ENCODE measurements at regions of chr3 and their contacts with region 1.

Region 1: DNA sequence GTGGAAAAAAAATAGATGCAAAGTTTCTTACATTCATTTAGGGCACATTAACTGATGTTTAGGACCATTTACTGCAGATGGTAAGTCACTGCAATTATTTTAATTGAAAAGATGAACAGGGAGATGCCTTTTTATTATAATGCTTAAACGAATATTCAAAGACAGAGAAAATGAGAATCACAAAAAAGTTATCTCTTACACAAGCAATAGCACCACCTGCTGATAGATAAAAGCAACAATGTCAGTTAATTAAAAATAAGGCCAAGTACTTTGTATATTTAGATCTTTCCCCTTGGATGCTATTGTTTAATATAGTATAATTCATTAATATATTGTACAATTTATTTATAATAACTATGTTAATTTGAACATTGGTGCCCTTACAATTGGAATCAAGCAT is 55.9 kb downstream of the IFT80 start:
- DNase-seq: no peak
- ATAC-seq: no peak
- H3K4me3 ChIP-seq: no peak overlapping the region
- H3K27ac ChIP-seq: no peak overlapping the region
- H3K4me1 ChIP-seq: no peaks in the 10 kb centered on the region
- H3K27me3 ChIP-seq: no peaks in the 10 kb centered on the region
- CTCF ChIP-seq: peak; percentile 34 to 63 (median 45); a peak in 3 of 6 replicates
- POLR2A ChIP-seq: no peak
- RAD21 ChIP-seq: peak; percentile 67

Region 2: DNA sequence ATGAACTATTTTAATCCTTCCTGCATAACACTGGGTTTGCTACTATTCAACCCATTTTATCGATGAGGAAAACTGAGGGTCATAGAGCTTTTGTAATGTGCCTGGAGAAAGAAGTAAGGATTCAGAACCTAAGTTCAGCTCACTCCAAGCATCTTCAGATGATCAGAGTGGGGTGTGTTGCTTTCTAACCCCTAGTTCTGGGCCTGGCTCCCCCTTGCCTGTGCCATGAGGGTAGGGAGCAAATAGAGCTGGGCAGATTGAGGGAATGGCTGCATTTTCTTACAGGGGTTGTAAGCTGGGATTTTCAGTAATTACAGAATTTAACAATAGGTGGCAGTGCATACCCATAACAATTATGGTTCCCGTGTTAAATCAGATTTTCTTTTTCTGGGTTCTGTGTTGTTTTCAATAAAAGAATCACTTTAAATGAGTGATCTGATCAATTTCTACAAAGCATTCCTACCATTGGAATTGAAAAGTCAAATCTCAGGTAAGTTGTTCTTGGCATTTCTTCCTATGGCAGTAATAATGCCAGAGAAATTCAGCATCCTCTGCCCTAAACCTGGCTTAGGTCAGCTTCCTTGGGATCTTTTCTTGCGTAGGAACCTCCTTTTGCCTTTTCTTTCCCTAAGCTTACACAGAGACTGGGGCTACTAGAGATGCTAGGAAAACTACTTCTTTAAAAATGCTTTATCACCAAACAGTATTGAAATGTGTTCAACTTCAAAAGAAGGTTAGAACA is 458.3 kb before region 1 on chr3:
- CTCF ChIA-PET with region 1: no interaction called
- POLR2A ChIA-PET with region 1: no interaction called
- RAD21 ChIA-PET with region 1: no interaction called
- intact Hi-C with region 1: loop called (anchors 5 kb)
- DNase-seq: no peak
- ATAC-seq: peak; percentile 86
- H3K4me3 ChIP-seq: no peak overlapping the region
- H3K27ac ChIP-seq: no peak overlapping the region
- H3K4me1 ChIP-seq: peaks cover 0 to 9% of the 10 kb centered on the region in 2 experiments; a peak in 2 of 4 replicates
- H3K27me3 ChIP-seq: no peaks in the 10 kb centered on the region
- CTCF ChIP-seq: peak; percentile 46 to 62 (median 59); a peak in 5 of 6 replicates
- POLR2A ChIP-seq: no peak
- RAD21 ChIP-seq: peak; percentile 73